BJ (cell line): ENCODE measurements at regions of chr1 and their contacts with region 1.

Region 1: DNA sequence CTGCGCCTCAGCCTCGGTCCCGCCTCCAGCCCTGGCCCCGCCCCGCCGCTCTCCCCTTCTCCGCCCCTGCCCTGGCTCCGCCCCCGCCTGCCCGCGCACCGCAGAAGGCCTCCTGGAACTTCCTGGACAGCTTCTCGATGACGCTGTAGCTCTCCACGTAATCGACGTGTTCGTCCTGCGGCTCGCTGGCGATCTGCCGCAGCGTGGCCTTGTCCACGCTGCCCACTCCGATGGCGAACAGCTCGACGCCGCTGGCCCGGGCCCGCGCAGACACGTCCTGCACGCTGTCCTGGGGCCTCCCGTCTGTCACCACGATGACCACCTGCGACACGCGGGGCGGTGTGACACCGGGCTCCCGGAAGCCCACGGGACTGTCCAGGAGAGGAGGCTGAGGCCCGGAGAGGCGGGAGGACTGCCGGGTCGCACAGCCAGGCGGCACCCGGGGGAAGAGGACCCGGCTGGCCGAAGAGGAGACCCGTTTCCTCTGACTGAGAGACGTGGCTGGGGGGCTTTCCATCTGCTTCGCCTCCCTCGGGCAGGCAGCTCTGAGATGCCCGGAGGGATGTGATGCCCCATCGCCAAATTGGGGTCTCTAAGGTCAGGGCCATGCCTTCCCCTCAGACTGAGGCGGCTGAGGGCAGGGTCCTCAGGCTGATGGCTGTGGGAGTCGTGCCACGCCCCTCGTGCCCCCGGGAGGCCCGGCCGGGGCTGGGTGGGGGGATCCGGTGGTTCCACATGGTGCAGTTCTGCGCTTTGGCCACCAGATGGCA is 4.6 kb downstream of the MATN1 start:
- DNase-seq: peak; percentile 73
- H3K4me3 ChIP-seq: peak overlapping the region; percentile 46
- H3K27me3 ChIP-seq: no peaks in the 10 kb centered on the region; the same call in 1 of the 2 replicates
- CTCF ChIP-seq: peak; percentile 88

Region 2: DNA sequence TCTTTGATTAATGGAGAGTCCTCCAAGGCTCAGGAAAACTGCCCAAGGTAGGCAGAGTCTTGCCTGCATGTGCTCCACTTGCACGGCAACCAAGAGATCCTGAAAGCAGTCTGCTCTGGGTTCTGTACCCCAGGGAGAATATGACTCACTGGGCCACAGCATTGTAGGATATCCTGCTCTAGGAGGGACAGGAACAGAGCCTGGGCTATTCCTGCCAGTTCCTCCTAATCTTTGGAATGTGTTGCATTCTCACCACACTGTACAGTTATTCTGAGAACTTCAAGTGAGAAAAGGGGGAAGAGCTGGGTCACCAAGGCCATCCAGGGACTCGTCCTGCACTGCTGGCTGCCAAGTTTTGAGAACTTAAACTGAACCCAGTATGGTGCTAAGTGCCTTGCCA is 274.0 kb before region 1 on chr1:
- CTCF ChIA-PET with region 1: no interaction called
- POLR2A ChIA-PET with region 1: no interaction called
- DNase-seq: no peak
- H3K4me3 ChIP-seq: no peak overlapping the region
- H3K27me3 ChIP-seq: no peaks in the 10 kb centered on the region
- CTCF ChIP-seq: no peak

Region 3: GRCh38 chr1:30461639-30462038 is 257.2 kb before region 1 on chr1:
- CTCF ChIA-PET with region 1: no interaction called
- POLR2A ChIA-PET with region 1: no interaction called
- DNase-seq: no peak
- H3K4me3 ChIP-seq: no peak overlapping the region
- H3K27me3 ChIP-seq: no peaks in the 10 kb centered on the region
- CTCF ChIP-seq: no peak

Region 4: DNA sequence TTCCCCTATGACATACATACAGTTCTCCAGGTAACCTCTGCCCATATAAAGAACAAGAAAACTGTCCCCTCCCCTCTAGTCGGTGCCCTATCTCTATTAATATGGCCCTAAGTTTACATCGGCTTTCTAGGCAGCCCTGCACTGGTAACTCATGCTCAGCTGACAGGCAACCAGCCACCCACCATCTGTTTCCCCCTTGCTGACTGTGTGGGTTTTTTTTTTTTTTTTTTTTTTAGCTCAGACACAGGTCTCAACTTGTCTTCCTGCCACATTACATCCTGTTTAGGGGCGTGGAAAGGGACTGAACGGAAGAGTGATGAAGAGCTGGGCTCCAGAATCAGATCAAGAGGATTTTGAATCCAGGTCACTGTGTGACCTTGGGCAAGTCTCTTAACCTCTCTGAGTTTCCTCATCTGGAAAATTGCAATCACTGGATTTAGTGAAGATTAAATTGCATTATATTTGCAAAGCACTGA is 24.8 kb after region 1 on chr1:
- CTCF ChIA-PET with region 1: interaction called, 17 read pairs
- POLR2A ChIA-PET with region 1: no interaction called
- DNase-seq: no peak
- H3K4me3 ChIP-seq: no peak overlapping the region
- H3K27me3 ChIP-seq: peaks cover 5% of the 10 kb centered on the region
- CTCF ChIP-seq: no peak

Region 5: DNA sequence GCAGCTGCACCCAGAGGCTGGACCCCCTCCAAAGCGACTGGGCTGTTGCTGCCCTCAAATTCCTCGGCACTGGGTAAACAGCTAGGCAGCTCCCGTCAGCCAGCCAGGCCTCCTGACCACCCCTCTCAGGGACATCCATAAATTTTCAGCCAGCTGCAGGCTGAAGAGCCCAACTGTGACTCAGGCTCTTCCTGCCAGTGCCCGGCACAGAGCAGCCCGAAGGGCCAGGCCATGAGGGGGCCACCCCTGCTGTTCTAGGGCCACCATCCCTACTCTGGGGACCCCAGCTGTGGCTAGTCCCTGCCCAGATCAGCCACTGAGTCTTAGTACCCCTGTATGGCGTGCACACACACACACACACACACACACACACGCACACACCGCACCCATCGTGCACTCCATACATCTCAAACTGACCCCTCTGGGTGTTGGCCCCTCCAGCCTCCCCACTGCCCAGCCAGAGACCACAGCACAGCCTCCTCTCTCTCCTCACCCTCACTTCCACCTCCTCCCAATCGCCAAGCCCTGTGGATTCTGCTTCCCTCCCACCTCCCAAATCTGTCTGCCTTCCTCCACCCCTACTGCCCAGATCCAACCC is 44.9 kb after region 1 on chr1:
- CTCF ChIA-PET with region 1: interaction called, 49 read pairs
- POLR2A ChIA-PET with region 1: no interaction called
- DNase-seq: peak; percentile 18
- H3K4me3 ChIP-seq: no peak overlapping the region
- H3K27me3 ChIP-seq: no peaks in the 10 kb centered on the region
- CTCF ChIP-seq: no peak

Region 6: DNA sequence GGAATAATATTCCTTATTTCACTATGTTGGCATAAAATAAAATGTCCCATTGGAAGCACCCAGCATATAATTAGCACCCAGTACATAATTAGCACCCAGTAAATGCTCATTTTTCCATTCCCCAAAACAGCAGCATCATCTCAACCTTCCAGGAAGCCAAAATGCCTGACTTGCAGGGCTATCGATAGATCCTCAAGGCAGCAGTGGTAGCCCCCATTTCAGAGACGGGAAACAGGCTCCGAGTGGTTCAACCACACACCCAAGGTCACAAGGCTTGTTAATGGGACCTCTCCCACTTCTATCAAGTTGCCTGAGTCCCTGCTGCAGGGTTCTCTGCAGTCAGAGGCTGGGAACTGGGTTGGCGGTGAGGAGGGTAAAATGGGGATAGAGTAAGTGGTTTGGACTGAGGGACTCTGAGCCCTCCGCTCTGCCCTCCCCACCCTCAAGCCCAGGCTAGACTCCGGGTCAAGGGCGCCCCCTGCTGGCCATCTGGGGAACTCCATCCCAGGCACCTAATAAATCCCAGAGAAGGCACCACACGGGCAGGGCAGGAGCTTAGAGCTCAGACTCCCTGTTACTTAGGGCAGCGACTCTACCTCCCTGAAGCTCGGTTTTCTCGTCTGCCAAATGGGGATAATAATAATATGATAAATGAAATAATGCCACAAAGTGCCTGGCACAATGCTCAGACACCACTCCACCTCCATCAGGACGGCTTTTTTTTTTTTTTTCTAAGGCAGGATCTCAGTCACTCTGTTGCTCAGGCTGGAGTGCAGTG is 60.7 kb after region 1 on chr1:
- CTCF ChIA-PET with region 1: interaction called, 354 read pairs
- POLR2A ChIA-PET with region 1: interaction called, 9 read pairs
- DNase-seq: peak; percentile 15
- H3K4me3 ChIP-seq: no peak overlapping the region
- H3K27me3 ChIP-seq: no peaks in the 10 kb centered on the region
- CTCF ChIP-seq: peak; percentile 92

Region 7: DNA sequence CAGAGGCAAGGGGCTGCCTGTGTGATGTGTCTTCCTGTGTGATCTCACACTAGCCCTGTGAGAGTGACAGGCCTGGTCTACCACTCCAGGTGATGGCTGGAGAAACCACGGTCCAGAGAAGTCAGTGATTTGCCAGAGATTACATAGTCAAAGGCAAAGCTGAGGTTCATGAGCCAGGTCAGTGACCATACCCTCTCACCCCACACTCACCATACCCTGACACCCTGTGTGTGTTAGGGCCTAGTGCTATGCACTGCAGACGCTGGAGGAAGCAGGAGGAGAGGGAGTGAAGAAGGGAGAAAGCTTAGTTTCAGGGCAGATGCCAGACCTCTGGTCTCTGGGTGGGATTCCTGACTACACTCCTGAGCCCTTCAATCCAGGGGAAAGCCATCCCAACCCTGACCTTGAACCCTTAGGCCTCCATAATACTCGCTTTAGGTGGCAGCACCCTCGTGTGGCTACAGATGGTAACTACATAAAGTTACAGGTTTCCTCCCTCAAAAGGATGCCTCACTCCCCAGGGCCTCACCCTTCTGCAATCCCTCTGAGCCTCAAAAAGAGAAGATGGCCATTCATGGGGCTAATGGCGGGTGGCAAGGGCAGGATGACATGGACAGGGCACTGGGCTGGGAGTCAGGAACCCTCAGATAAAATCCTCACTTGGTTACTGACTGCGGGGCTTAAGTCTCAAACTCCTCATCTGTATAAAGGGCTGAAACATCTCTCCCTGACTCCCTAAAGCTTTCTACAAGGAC is 210.5 kb after region 1 on chr1:
- CTCF ChIA-PET with region 1: interaction called, 17 read pairs
- POLR2A ChIA-PET with region 1: no interaction called
- DNase-seq: no peak
- H3K4me3 ChIP-seq: no peak overlapping the region
- H3K27me3 ChIP-seq: no peaks in the 10 kb centered on the region
- CTCF ChIP-seq: peak; percentile 74